ENCODE measurements at regions of chr13 and their contacts with region 1.

Region 1: GRCh38 chr13:19587635-19588300 is 26.4 kb upstream of the TPTE2 start:
- DNase-seq: peak; percentile 35
- H3K4me3 ChIP-seq: no peak overlapping the region
- H3K27ac ChIP-seq: no peak overlapping the region
- H3K4me1 ChIP-seq: no peaks in the 10 kb centered on the region
- H3K27me3 ChIP-seq: no peaks in the 10 kb centered on the region
- CTCF ChIP-seq: peak; percentile 29 to 56

Region 2: GRCh38 chr13:19618925-19619324 is 31.2 kb after region 1 on chr13:
- CTCF ChIA-PET with region 1: no interaction called
- dilution Hi-C with region 1: no loop called
- in situ Hi-C with region 1: no loop called
- intact Hi-C with region 1: loop called (anchors 1 kb)
- DNase-seq: no peak
- H3K4me3 ChIP-seq: no peak overlapping the region
- H3K27ac ChIP-seq: no peak overlapping the region
- H3K4me1 ChIP-seq: no peaks in the 10 kb centered on the region
- H3K27me3 ChIP-seq: no peaks in the 10 kb centered on the region
- CTCF ChIP-seq: peak; percentile 74 to 81

Region 3: DNA sequence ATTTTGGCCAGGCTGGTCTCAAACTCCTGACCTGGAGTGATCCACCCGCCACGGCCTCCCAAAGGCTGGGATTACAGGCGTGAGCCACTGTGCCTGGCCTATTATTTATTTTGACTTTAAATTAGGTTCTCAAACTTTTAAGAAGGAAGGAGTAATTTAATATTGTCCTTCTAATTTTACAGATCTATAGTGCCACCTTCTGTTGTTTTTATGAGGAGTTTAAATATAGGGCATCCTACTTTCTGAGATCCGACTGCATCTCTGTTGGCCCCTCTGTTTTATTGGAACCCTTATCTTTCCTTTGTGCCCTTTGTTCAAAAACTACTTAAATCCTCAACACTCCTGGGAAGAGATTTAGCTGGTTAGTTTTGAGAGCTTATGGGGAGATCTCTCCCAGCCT is 301.0 kb after region 1 on chr13:
- CTCF ChIA-PET with region 1: no interaction called
- dilution Hi-C with region 1: no loop called
- in situ Hi-C with region 1: no loop called
- intact Hi-C with region 1: loop called (anchors 2 kb)
- DNase-seq: peak; percentile 6
- H3K4me3 ChIP-seq: no peak overlapping the region
- H3K27ac ChIP-seq: no peak overlapping the region
- H3K4me1 ChIP-seq: no peaks in the 10 kb centered on the region
- H3K27me3 ChIP-seq: no peaks in the 10 kb centered on the region
- CTCF ChIP-seq: peak in 1 of 2 donors; percentile 20

Measured in mammary epithelial cell (primary cell).